GM12878 (cell line): ENCODE measurements at regions of chr1 and their contacts with region 1.

Region 1: GRCh38 chr1:101325144-101325543 is 88.3 kb downstream of the S1PR1 start:
- DNase-seq: no peak
- ATAC-seq: no peak
- H3K4me3 ChIP-seq: no peak overlapping the region
- H3K27ac ChIP-seq: no peak overlapping the region
- H3K4me1 ChIP-seq: no peaks in the 10 kb centered on the region
- H3K27me3 ChIP-seq: no peaks in the 10 kb centered on the region
- CTCF ChIP-seq: no peak
- EP300 ChIP-seq: no peak
- POLR2A ChIP-seq: no peak
- RAD21 ChIP-seq: no peak

Region 2: DNA sequence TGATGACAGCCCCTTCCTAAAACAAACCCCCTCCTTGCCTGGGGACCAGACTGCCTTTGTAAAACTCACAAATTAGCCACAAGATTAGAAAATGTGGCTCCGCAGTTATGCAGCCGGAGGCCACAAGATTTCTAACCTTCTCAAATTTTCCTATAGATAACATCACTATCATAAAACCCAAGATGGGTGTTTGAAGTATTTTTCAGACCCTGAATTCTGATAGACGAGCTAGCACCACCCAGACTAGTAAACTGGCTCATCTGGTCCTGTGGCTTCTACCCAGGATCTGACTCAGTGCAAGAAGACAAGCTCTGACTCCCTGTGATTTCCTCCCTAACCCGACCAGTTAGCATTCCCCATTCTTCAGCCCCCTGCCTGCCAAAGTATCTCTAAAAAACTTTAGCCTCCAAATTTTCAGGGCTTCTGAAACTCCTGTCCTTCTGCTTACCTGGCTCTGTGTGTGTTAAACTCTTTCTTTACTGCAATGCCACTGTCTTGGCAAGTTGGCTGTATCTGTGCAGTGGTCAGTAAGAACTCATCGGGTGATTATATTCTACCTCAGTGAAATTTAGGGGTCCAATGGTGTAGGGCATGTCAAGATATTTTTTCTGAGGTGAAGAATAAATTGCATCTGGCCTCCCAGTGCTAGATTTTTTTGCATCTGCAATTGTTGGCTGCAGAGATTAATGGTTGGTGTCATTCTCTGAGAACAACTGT is 13.7 kb after region 1 on chr1:
- CTCF ChIA-PET with region 1: interaction called, 4 read pairs
- POLR2A ChIA-PET with region 1: interaction called, 3 read pairs
- RAD21 ChIA-PET with region 1: no interaction called
- SMC1A ChIA-PET with region 1: interaction called, 18 read pairs
- in situ Hi-C with region 1: no loop called
- intact Hi-C with region 1: no loop called
- DNase-seq: no peak
- ATAC-seq: no peak
- H3K4me3 ChIP-seq: no peak overlapping the region
- H3K27ac ChIP-seq: no peak overlapping the region
- H3K4me1 ChIP-seq: no peaks in the 10 kb centered on the region
- H3K27me3 ChIP-seq: no peaks in the 10 kb centered on the region
- CTCF ChIP-seq: no peak
- EP300 ChIP-seq: no peak
- POLR2A ChIP-seq: no peak
- RAD21 ChIP-seq: no peak

Region 3: DNA sequence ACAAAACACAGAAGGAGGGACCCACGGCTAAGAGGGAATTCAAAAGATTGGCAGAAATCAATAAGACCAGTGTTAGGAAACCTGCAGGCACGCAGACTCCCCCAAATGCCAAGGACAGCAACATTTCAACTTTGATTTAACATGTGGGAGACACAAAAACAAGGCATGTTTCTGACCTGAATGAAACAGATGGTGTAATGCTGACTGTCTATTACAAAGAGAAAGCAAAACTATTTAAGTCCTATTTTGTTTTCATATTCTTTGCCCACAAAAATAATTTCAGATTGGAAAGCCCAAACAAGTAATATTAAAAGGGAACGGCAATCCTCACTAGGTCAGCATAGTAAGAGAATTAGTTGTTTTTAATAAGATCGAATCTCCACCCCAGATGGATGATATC is 19.6 kb after region 1 on chr1:
- CTCF ChIA-PET with region 1: interaction called, 10 read pairs
- POLR2A ChIA-PET with region 1: interaction called, 6 read pairs
- RAD21 ChIA-PET with region 1: interaction called, 4 read pairs
- SMC1A ChIA-PET with region 1: interaction called, 18 read pairs
- in situ Hi-C with region 1: no loop called
- intact Hi-C with region 1: no loop called
- DNase-seq: no peak
- ATAC-seq: peak; percentile 65; the same call in 2 of the 3 replicates
- H3K4me3 ChIP-seq: no peak overlapping the region
- H3K27ac ChIP-seq: no peak overlapping the region
- H3K4me1 ChIP-seq: no peaks in the 10 kb centered on the region
- H3K27me3 ChIP-seq: no peaks in the 10 kb centered on the region
- CTCF ChIP-seq: no peak
- EP300 ChIP-seq: no peak
- POLR2A ChIP-seq: no peak
- RAD21 ChIP-seq: no peak